Right ventricle myocardium inferior (tissue), 1 donor: ENCODE measurements at regions of chr15 and their contacts with region 1.

Region 1: GRCh38 chr15:65184868-65185738 is at the start of gene CLPX:
- DNase-seq: peak; percentile 96
- ATAC-seq: peak; percentile 96
- total RNA-seq, gene CLPX: 54.6 TPM

Region 2: GRCh38 chr15:65008983-65009382 is 176.1 kb before region 1 on chr15:
- intact Hi-C with region 1: no loop called
- DNase-seq: no peak
- ATAC-seq: no peak

Region 3: DNA sequence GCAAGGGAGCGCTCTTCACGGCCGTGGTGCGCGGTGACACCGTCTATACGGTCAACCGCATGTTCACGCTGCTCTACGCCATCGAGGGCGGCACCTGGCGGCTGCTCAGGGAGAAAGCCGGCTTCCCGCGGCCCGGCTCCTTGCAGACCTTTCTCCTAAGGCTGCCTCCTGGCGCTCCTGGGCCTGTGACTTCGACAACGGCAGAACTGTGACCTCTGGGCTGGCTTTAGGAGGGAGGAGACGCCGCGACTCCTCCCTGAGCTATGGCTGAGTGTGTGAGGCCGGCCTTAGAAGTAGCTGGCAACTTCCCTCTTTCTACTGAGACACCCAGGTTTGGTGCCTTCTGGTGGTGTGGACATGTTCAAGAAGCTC is 107.1 kb before region 1 on chr15:
- intact Hi-C with region 1: no loop called
- DNase-seq: peak; percentile 88
- ATAC-seq: peak; percentile 71

Region 4: DNA sequence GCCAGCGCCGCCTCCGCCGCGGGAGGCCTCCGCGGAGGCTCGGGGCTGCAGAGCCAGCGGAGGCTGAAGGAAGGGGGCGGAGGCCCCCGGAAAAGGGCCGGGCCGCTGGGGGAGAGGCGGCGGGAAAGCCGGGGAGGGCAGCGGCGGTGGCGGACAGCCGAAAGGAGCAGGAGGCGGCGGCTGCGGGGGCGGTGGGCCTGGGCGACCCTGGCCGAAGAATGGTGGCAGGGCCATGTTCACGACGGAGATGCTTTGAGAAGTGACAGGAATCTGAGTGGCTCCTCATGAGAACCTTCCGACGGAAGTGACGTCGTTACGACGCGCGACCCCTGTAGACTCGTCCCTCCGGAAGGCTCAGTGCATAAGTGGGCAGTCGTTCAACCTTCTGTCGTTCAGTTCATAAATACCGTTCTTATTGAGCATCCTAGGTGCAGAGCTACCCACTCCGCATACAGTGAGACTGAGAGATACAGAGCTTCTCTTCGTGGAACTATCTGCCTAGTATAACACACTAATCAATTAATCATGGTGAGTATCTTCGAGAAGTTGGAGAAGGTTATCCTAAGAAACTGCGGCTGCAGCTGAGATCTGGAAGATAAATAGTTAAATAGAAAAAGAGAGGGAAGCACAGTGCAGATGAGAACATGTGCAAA is 51.4 kb before region 1 on chr15 and contains the start of gene PDCD7:
- intact Hi-C with region 1: loop called (anchors 10 kb)
- DNase-seq: peak; percentile 94
- ATAC-seq: peak; percentile 94
- total RNA-seq, gene PDCD7: 17.9 TPM

Region 5: DNA sequence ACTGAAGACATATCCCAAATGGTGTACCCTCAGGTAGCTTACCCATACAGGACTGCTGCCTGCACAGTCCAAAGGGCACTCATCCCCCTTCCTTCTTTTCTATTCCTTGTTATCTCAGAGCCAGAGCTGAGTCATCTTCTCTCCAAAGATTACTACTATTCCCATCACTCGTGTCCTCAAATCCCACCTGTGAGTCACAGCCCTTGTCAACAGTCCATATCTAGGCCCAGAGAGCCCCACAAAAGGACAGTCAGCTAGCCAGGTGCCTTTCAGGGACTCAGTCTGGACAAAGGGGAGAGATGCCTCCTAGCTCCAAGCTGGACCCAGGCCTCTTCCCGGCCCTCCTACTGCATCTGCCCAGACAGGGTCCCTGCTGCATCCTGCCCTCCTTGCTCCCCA is 90.6 kb after region 1 on chr15:
- intact Hi-C with region 1: loop called (anchors 2 kb)
- DNase-seq: no peak
- ATAC-seq: no peak

Region 6: GRCh38 chr15:65304389-65305144 is 119.5 kb after region 1 on chr15 and contains the start of gene RNU5B-1:
- intact Hi-C with region 1: loop called (anchors 2 kb)
- DNase-seq: no peak
- ATAC-seq: peak; percentile 94
- total RNA-seq, gene RNU5B-1: 25.8 TPM